ENCODE measurements at regions of chr4 and their contacts with region 1.

Region 1: GRCh38 chr4:112916868-112917267 is 132.6 kb upstream of the ANK2 start:
- DNase-seq: no peak
- H3K4me3 ChIP-seq: no peak overlapping the region
- H3K27ac ChIP-seq: no peak overlapping the region
- H3K4me1 ChIP-seq: no peaks in the 10 kb centered on the region
- H3K27me3 ChIP-seq: no peaks in the 10 kb centered on the region
- CTCF ChIP-seq: no peak

Region 2: GRCh38 chr4:112253382-112254000 is 663.4 kb before region 1 on chr4:
- CTCF ChIA-PET with region 1: no interaction called
- POLR2A ChIA-PET with region 1: no interaction called
- intact Hi-C with region 1: no loop called
- DNase-seq: no peak
- H3K4me3 ChIP-seq: no peak overlapping the region
- H3K27ac ChIP-seq: no peak overlapping the region
- H3K4me1 ChIP-seq: peaks cover 4% of the 10 kb centered on the region
- H3K27me3 ChIP-seq: no peaks in the 10 kb centered on the region
- CTCF ChIP-seq: no peak

Region 3: DNA sequence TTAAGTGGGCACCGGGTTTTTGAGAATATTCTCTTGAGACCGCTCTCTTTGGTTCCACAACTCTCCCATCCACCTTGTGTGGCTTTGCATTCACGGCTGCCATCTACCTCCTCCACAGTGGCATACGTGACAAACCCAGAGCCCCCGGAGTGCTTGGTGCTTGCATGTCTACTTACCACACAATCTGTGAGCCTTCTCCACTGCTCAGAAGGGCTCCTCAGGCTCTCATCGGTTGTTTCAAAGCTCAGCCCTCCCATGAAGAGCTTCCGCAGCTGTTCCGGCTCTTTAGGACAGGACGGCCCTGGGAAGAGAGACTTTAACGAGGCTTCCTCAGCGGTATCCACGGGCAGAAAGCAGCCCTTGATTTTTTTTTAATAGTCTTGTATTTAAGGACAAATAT is 35.0 kb before region 1 on chr4:
- CTCF ChIA-PET with region 1: no interaction called
- POLR2A ChIA-PET with region 1: interaction called, 13 read pairs
- intact Hi-C with region 1: no loop called
- DNase-seq: peak; percentile 48
- H3K4me3 ChIP-seq: no peak overlapping the region
- H3K27ac ChIP-seq: no peak overlapping the region
- H3K4me1 ChIP-seq: no peaks in the 10 kb centered on the region
- H3K27me3 ChIP-seq: no peaks in the 10 kb centered on the region
- CTCF ChIP-seq: no peak

Measured in A673 (cell line).